ENCODE measurements at regions of chr11 and their contacts with region 1.

Region 1: DNA sequence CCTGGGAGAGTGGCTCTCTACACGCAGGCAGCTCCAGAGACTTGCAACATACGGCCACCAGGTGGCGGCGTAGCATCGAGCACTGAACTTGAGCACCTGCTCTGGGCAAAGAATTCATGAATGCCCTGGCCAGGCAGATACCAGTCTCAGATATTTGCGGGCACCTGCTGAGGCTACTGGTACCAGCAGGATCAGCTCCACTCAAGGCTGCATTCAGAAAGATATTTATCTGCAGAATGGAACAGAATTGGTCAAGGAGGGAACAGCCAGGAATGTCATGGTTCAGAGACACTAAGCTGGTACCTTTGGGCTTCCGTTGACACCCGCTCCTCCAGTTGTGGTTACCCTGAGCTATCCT is 10.8 kb upstream of the CCDC86 start:
- DNase-seq: peak; percentile 60 to 88 (median 83)
- ATAC-seq: peak; percentile 96
- H3K4me3 ChIP-seq: peak overlapping the region in 1 of 2 experiments; percentile 12
- H3K4me3 Mint-ChIP-seq: no peak overlapping the region
- H3K27ac ChIP-seq: no peak overlapping the region
- H3K27ac Mint-ChIP-seq: no peak overlapping the region
- H3K4me1 ChIP-seq: no peaks in the 10 kb centered on the region
- H3K4me1 Mint-ChIP-seq: no peaks in the 10 kb centered on the region
- H3K27me3 ChIP-seq: no peaks in the 10 kb centered on the region
- H3K27me3 Mint-ChIP-seq: peaks cover 6% of the 10 kb centered on the region
- CTCF ChIP-seq: peak; percentile 90

Region 2: DNA sequence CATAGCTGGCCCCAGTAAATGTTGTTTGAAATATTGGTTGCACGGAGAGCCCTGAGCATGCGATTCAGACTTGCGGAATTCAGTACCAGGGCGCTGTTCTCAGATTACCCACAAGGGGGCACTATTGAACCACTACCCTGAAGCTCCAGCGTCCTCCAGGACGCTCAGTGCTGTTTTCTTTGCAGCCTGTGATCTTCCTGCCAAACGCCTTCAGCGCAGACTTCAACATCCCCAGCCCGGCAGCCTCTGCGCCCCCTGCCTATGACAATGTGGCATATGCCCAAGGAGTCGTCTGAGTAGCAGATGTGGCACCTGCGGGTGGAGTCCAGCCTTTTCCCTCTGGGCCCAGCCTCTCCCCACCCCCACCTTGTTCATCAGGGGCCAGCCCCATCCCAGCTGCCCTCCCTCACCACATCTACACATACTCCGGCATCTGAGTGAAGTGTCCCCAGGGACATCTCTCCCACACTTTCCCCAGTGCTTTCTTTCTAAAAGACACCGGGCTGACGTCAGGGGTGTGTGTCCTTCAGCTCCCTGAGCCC is 55.6 kb before region 1 on chr11:
- CTCF ChIA-PET with region 1: interaction called, 4 read pairs
- POLR2A ChIA-PET with region 1: no interaction called
- intact Hi-C with region 1: loop called in 1 of 2 experiments (anchors 1 kb)
- DNase-seq: peak; percentile 65 to 90 (median 84)
- ATAC-seq: peak; percentile 98
- H3K4me3 ChIP-seq: no peak overlapping the region
- H3K4me3 Mint-ChIP-seq: peak overlapping the region; percentile 13
- H3K27ac ChIP-seq: no peak overlapping the region
- H3K27ac Mint-ChIP-seq: peak overlapping the region; percentile 18
- H3K4me1 ChIP-seq: peaks cover 4% of the 10 kb centered on the region
- H3K4me1 Mint-ChIP-seq: peaks cover 10% of the 10 kb centered on the region
- H3K27me3 ChIP-seq: no peaks in the 10 kb centered on the region
- H3K27me3 Mint-ChIP-seq: peaks cover 3% of the 10 kb centered on the region
- CTCF ChIP-seq: peak; percentile 81

Region 3: GRCh38 chr11:60855726-60856633 is 24.9 kb after region 1 on chr11 and contains the start of gene PTGDR2:
- CTCF ChIA-PET with region 1: interaction called, 13 read pairs
- POLR2A ChIA-PET with region 1: no interaction called
- intact Hi-C with region 1: no loop called
- DNase-seq: peak in 2 of 9 experiments; percentile 44 to 47
- ATAC-seq: no peak
- H3K4me3 ChIP-seq: no peak within 1 kb of the TSS
- H3K4me3 Mint-ChIP-seq: peak within 1 kb of the TSS; percentile 22
- H3K27ac ChIP-seq: no peak within 1 kb of the TSS
- H3K27ac Mint-ChIP-seq: no peak within 1 kb of the TSS
- H3K4me1 ChIP-seq: peaks cover 29% of the 10 kb centered on the region
- H3K4me1 Mint-ChIP-seq: peaks cover 39% of the 10 kb centered on the region
- H3K27me3 ChIP-seq: no peaks in the 10 kb centered on the region
- H3K27me3 Mint-ChIP-seq: no peaks in the 10 kb centered on the region
- CTCF ChIP-seq: no peak
- total RNA-seq, gene PTGDR2: 0.19 to 0.22 TPM

Region 4: GRCh38 chr11:60887556-60887955 is 56.4 kb after region 1 on chr11:
- CTCF ChIA-PET with region 1: interaction called, 98 read pairs
- POLR2A ChIA-PET with region 1: interaction called, 4 read pairs
- intact Hi-C with region 1: loop called (anchors 1 kb)
- DNase-seq: peak in 7 of 9 experiments; percentile 33 to 66 (median 49)
- ATAC-seq: peak; percentile 82
- H3K4me3 ChIP-seq: no peak overlapping the region
- H3K4me3 Mint-ChIP-seq: no peak overlapping the region
- H3K27ac ChIP-seq: no peak overlapping the region
- H3K27ac Mint-ChIP-seq: no peak overlapping the region
- H3K4me1 ChIP-seq: no peaks in the 10 kb centered on the region
- H3K4me1 Mint-ChIP-seq: peaks cover 6% of the 10 kb centered on the region
- H3K27me3 ChIP-seq: no peaks in the 10 kb centered on the region
- H3K27me3 Mint-ChIP-seq: no peaks in the 10 kb centered on the region
- CTCF ChIP-seq: peak; percentile 52

Region 5: GRCh38 chr11:60906132-60906972 is 75.2 kb after region 1 on chr11 and contains the start of gene PRPF19:
- CTCF ChIA-PET with region 1: interaction called, 163 read pairs
- POLR2A ChIA-PET with region 1: no interaction called
- intact Hi-C with region 1: no loop called
- DNase-seq: peak; percentile 98 to 100 (median 99)
- ATAC-seq: peak; percentile 92
- H3K4me3 ChIP-seq: peak within 1 kb of the TSS; percentile 61 to 81
- H3K4me3 Mint-ChIP-seq: peak within 1 kb of the TSS; percentile 89
- H3K27ac ChIP-seq: peak within 1 kb of the TSS; percentile 79 to 93
- H3K27ac Mint-ChIP-seq: peak within 1 kb of the TSS; percentile 99
- H3K4me1 ChIP-seq: peaks cover 45% of the 10 kb centered on the region
- H3K4me1 Mint-ChIP-seq: peaks cover 71% of the 10 kb centered on the region
- H3K27me3 ChIP-seq: no peaks in the 10 kb centered on the region
- H3K27me3 Mint-ChIP-seq: no peaks in the 10 kb centered on the region
- CTCF ChIP-seq: no peak
- total RNA-seq, gene PRPF19: 96.1 to 99.4 TPM

Region 6: GRCh38 chr11:61187505-61188130 is 356.5 kb after region 1 on chr11:
- CTCF ChIA-PET with region 1: interaction called, 38 read pairs
- POLR2A ChIA-PET with region 1: no interaction called
- intact Hi-C with region 1: loop called in 1 of 2 experiments (anchors 1 kb)
- DNase-seq: peak; percentile 64 to 89 (median 83)
- ATAC-seq: peak; percentile 100
- H3K4me3 ChIP-seq: no peak overlapping the region
- H3K4me3 Mint-ChIP-seq: no peak overlapping the region
- H3K27ac ChIP-seq: no peak overlapping the region
- H3K27ac Mint-ChIP-seq: no peak overlapping the region
- H3K4me1 ChIP-seq: no peaks in the 10 kb centered on the region
- H3K4me1 Mint-ChIP-seq: peaks cover 3% of the 10 kb centered on the region
- H3K27me3 ChIP-seq: peaks cover 0 to 3% of the 10 kb centered on the region in 2 experiments
- H3K27me3 Mint-ChIP-seq: no peaks in the 10 kb centered on the region
- CTCF ChIP-seq: peak; percentile 98

Region 7: DNA sequence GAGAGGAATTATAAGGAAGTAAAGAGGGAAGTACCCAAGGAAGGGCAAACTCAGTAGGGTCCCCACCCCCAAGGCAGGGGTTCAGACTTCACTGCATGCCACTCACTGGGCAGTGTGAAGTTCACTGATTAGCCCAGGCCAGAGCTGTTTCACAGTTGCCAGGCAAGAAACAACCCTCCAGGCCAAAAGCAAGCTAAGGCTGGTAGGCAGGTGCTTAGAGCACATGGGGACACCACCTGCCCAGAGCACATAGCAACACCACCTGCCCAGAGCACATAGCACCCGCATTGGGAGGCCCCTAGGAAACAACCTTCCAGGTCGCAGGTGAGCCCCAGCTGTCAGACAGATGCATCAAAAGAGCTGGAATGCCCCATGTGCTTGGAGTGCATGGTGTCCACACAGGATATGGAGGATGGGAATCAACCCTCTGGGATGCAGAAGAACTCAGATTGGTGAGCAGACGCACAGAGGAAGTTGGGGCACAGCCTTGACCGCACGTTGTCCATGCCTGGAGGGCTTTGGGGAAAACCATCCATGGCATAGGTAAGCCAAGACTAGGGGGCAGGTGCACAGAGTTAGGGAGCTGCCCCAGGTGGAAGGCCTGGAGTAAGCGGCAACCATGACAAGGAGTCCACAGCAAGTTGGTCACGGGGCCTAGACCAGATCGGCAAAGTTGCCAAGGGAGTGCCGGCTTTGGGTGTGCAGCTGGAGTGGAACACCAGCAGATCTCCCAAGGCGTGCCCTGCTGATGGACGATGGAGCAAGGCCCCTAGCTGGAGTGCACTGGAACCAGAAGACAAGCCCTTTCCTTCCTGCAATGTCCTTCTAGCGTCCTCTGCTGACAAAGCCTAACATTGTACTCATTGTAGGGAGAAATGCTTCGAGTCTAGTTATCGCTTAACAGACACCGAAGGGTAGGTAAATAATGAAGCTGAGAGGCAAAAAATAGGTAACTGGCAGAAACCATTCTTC is 553.4 kb after region 1 on chr11:
- CTCF ChIA-PET with region 1: interaction called, 9 read pairs
- POLR2A ChIA-PET with region 1: no interaction called
- intact Hi-C with region 1: loop called in 1 of 2 experiments (anchors 1 kb)
- DNase-seq: no peak
- ATAC-seq: no peak
- H3K4me3 ChIP-seq: no peak overlapping the region
- H3K4me3 Mint-ChIP-seq: no peak overlapping the region
- H3K27ac ChIP-seq: no peak overlapping the region
- H3K27ac Mint-ChIP-seq: no peak overlapping the region
- H3K4me1 ChIP-seq: no peaks in the 10 kb centered on the region
- H3K4me1 Mint-ChIP-seq: peaks cover 7% of the 10 kb centered on the region
- H3K27me3 ChIP-seq: no peaks in the 10 kb centered on the region
- H3K27me3 Mint-ChIP-seq: no peaks in the 10 kb centered on the region
- CTCF ChIP-seq: no peak

Measured in CD8-positive, alpha-beta T cell (primary cell).